ENCODE measurements at regions of chr15 and their contacts with region 1.

Region 1: GRCh38 chr15:85330901-85331588 is 49.4 kb upstream of the AKAP13 start:
- DNase-seq: peak; percentile 82
- ATAC-seq: peak; percentile 97
- H3K4me3 ChIP-seq: 0 out of 4 replicates have a peak overlapping the region, but pooled peaks of 1 of the 2 experiments have one; percentile 14
- H3K27ac ChIP-seq: no peak overlapping the region; the same call in 1 of the 2 replicates
- H3K4me1 ChIP-seq: peaks cover 13 to 24% of the 10 kb centered on the region in 2 experiments; a peak in 3 of 4 replicates
- H3K27me3 ChIP-seq: no peaks in the 10 kb centered on the region
- CTCF ChIP-seq: peak; percentile 84 to 93 (median 91)
- POLR2A ChIP-seq: no peak
- RAD21 ChIP-seq: peak; percentile 97

Region 2: DNA sequence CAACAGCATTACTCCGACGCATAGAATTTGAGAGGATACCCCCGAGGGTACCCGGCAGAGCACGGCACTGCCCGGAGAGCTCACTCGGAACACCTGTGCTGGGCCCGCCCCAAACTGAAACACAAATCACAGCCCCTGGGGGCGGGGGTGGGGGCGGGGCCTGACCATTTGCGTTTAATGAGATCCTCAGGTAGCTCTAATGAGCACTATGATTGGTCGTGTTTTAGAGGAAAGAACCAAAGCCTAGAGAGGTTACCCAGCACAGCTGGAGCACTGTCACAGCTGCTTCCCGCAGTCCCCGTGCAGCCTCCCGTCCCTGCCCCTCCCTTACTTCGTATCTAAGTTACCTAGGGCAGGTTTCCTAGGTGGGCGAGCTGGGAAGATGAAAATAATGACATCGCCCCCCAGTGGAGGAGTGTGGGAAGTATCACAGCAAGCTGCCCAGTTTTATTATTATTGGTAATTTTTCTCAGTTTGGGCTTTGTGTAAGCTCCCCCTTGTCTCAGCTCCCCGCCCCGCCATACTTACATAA is 162.3 kb before region 1 on chr15:
- CTCF ChIA-PET with region 1: no interaction called
- POLR2A ChIA-PET with region 1: no interaction called
- RAD21 ChIA-PET with region 1: no interaction called
- intact Hi-C with region 1: no loop called
- DNase-seq: peak; percentile 18
- ATAC-seq: peak; percentile 81
- H3K4me3 ChIP-seq: no peak overlapping the region
- H3K27ac ChIP-seq: no peak overlapping the region
- H3K4me1 ChIP-seq: no peaks in the 10 kb centered on the region
- H3K27me3 ChIP-seq: no peaks in the 10 kb centered on the region
- CTCF ChIP-seq: peak; percentile 22 to 61 (median 49); a peak in 5 of 6 replicates
- POLR2A ChIP-seq: no peak
- RAD21 ChIP-seq: peak; percentile 56

Region 3: GRCh38 chr15:85412956-85413854 is 82.2 kb after region 1 on chr15:
- CTCF ChIA-PET with region 1: interaction called, 27 read pairs
- POLR2A ChIA-PET with region 1: interaction called, 3 read pairs
- RAD21 ChIA-PET with region 1: interaction called, 11 to 14 read pairs
- intact Hi-C with region 1: loop called (anchors 2 kb)
- DNase-seq: peak; percentile 88
- ATAC-seq: peak; percentile 98
- H3K4me3 ChIP-seq: peak overlapping the region; percentile 7 to 18; a peak in 3 of 4 replicates
- H3K27ac ChIP-seq: peak overlapping the region; percentile 69
- H3K4me1 ChIP-seq: peaks cover 36 to 58% of the 10 kb centered on the region in 2 experiments
- H3K27me3 ChIP-seq: no peaks in the 10 kb centered on the region
- CTCF ChIP-seq: 0 out of 6 replicates have a peak, but pooled peaks of 1 of the 3 experiments have one; percentile 31
- POLR2A ChIP-seq: no peak
- RAD21 ChIP-seq: peak; percentile 25; the same call in 1 of the 2 replicates

Region 4: GRCh38 chr15:85494048-85494793 is 163.2 kb after region 1 on chr15:
- CTCF ChIA-PET with region 1: no interaction called
- POLR2A ChIA-PET with region 1: no interaction called
- RAD21 ChIA-PET with region 1: no interaction called
- intact Hi-C with region 1: loop called (anchors 5 kb)
- DNase-seq: peak; percentile 93
- ATAC-seq: peak; percentile 100
- H3K4me3 ChIP-seq: peak overlapping the region in 1 of 2 experiments; percentile 40; a peak in 3 of 4 replicates
- H3K27ac ChIP-seq: peak overlapping the region; percentile 58
- H3K4me1 ChIP-seq: peaks cover 21 to 41% of the 10 kb centered on the region in 2 experiments
- H3K27me3 ChIP-seq: no peaks in the 10 kb centered on the region
- CTCF ChIP-seq: no peak
- POLR2A ChIP-seq: no peak
- RAD21 ChIP-seq: peak; percentile 24

Region 5: DNA sequence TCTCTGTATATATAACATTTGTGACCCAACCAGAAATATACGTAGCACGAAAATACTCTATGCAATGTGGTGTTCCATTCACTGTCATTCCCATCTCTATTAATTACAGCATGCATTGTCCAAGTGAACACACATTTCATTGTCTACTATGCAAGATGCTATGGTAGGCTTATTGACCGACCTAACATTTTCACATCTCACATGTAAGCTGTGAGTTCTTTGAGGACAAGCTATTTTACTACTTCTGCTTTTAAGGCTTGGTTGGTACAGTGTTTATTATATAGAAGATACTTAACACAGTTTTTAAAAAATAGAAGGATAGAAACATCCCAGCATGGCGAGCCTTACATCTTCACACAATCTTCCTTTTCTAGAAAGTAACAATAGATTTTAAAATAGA is 299.3 kb after region 1 on chr15:
- CTCF ChIA-PET with region 1: no interaction called
- POLR2A ChIA-PET with region 1: no interaction called
- RAD21 ChIA-PET with region 1: no interaction called
- intact Hi-C with region 1: no loop called
- DNase-seq: no peak
- ATAC-seq: no peak
- H3K4me3 ChIP-seq: no peak overlapping the region
- H3K27ac ChIP-seq: no peak overlapping the region
- H3K4me1 ChIP-seq: no peaks in the 10 kb centered on the region
- H3K27me3 ChIP-seq: no peaks in the 10 kb centered on the region
- CTCF ChIP-seq: no peak
- POLR2A ChIP-seq: no peak
- RAD21 ChIP-seq: no peak

Measured in HCT116 (cell line).